ENCODE measurements at regions of chr3 and their contacts with region 1.

Region 1: DNA sequence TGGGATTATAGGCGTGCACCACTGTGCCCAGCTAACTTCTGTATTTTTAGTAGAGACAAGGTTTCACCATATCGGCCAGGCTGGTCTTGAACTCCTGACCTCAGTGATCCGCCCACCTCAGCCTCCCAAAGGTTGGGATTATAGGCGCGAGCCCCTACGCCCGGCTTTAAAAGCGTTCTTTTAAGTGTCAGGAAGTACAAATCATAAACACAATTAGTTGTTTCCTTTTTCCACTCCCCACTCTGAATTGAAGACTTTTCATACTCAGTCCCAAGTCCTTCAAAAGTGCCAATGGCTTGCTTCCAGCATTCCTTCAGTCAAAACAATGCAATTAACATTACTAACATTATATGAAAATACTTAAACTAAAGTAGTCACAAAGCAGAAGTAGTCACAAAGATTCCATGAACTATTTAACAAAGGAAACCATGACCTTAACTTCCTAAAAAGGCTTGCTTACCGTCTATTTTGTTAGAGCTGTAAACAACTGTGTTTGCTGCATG is 8.1 kb downstream of the WDR82 start:
- DNase-seq: peak; percentile 31
- H3K4me3 Mint-ChIP-seq: peak overlapping the region; percentile 77
- H3K27ac Mint-ChIP-seq: peak overlapping the region; percentile 91
- H3K4me1 Mint-ChIP-seq: peaks cover 85% of the 10 kb centered on the region
- H3K27me3 Mint-ChIP-seq: no peaks in the 10 kb centered on the region

Region 2: GRCh38 chr3:52238761-52239701 is 31.3 kb before region 1 on chr3 and contains the start of gene TWF2:
- CTCF ChIA-PET with region 1: interaction called, 148 read pairs
- POLR2A ChIA-PET with region 1: interaction called, 16 read pairs
- intact Hi-C with region 1: loop called (anchors 1 kb)
- DNase-seq: peak; percentile 90
- H3K4me3 Mint-ChIP-seq: peak within 1 kb of the TSS; percentile 99
- H3K27ac Mint-ChIP-seq: peak within 1 kb of the TSS; percentile 97
- H3K4me1 Mint-ChIP-seq: peaks cover 70% of the 10 kb centered on the region
- H3K27me3 Mint-ChIP-seq: no peaks in the 10 kb centered on the region
- total RNA-seq, gene TWF2: 114 to 118 TPM

Region 3: DNA sequence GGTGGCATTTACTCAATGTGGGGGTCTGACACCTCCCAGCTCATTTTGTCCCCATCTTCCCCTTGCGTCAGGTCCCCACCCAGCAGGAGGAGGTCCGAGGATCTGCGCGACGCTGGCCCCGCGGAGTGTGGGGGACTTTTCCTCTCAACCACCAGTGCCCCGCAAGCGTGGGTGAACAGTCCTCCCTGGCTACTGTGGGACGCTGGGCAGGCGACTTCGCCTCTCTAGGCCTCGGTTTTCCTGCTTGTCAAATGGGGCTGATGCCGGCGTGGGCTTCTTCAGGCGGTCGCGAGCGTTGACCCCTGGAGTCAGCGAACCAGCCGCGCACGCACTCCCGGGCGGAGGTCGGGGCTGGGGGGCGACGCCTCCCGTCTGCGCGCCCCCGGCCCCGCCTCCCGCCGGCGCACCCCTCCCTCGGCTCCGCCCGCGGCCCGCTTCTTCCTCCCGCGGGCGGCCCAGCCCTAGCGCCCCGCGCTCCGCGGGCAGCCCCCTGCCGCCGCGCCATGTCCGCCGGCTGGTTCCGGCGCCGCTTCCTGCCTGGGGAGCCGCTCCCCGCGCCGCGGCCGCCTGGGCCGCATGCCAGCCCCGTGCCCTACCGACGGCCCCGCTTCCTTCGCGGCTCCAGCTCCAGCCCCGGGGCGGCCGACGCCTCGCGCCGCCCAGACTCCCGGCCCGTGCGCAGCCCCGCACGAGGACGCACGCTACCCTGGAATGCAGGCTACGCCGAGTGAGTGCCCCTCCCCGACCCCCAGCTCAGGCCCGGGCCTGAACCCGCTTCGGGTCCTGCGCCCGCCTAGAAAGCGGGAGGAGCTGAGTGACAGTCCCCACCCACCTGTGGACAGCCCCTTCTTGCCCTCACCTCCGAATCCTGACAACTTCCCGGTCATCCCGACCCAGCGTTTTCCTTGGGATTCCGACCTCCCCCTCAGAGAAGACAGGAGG is 24.7 kb before region 1 on chr3 and contains the start of gene PPM1M:
- CTCF ChIA-PET with region 1: interaction called, 148 read pairs
- POLR2A ChIA-PET with region 1: interaction called, 16 read pairs
- intact Hi-C with region 1: loop called (anchors 1 kb)
- DNase-seq: peak; percentile 64
- H3K4me3 Mint-ChIP-seq: peak within 1 kb of the TSS; percentile 95
- H3K27ac Mint-ChIP-seq: peak within 1 kb of the TSS; percentile 94
- H3K4me1 Mint-ChIP-seq: peaks cover 80% of the 10 kb centered on the region
- H3K27me3 Mint-ChIP-seq: no peaks in the 10 kb centered on the region
- total RNA-seq, gene PPM1M: 111 TPM

Region 4: DNA sequence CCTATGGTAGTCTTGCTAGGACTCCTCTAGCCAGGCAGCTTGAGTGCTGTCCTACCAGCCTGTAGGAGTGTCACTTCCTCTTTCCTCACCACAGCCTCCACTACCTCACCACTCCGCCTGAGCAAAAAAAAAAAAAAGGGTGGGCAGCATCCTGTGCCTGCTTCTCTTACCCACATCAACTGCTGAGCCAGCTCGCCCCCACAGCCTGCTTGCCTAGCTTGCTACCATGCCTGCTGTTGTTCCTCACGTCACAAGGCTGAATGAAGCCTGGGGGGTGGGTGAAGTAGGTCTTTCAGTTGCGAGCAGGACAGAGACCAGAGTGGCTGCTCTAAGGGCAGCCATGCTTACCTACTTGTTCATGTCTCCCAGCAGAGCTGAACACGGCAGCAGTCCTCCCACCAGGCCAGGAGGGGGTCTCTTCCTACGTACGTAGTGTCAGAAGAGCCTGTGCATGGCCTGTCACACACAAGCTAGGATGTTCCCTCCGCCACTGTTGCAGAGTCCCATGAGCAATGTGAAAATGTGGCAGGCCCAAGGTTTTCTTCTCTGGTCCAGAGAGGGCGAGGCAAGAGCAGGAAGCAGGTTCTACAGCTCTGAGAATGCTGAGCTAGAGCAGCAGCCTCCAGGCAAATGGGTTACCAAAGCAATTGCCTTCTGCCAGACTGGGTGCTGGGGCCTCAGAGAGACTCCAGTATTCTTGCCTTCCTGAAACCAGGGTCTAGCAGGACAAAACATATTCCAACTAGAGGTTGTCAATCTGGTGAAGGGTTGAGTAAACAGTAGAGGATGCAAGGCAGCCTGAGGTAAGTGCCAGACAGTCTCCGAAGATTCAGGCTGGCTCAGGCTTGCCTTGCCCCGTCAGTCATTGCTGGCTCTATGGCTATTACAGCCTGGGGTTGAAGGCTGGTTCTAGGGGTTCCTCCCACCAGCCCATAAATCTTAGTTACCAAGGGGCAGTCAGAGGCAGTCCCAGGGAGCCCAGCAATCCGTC is 16.7 kb before region 1 on chr3:
- CTCF ChIA-PET with region 1: interaction called, 7 read pairs
- POLR2A ChIA-PET with region 1: interaction called, 26 read pairs
- intact Hi-C with region 1: loop called (anchors 1 kb)
- DNase-seq: peak; percentile 93
- H3K4me3 Mint-ChIP-seq: peak overlapping the region; percentile 71
- H3K27ac Mint-ChIP-seq: peak overlapping the region; percentile 97
- H3K4me1 Mint-ChIP-seq: peaks cover 88% of the 10 kb centered on the region
- H3K27me3 Mint-ChIP-seq: no peaks in the 10 kb centered on the region

Region 5: GRCh38 chr3:52259035-52259434 is 11.3 kb before region 1 on chr3:
- CTCF ChIA-PET with region 1: interaction called, 12 read pairs
- POLR2A ChIA-PET with region 1: interaction called, 26 read pairs
- intact Hi-C with region 1: loop called (anchors 1 kb)
- DNase-seq: no peak
- H3K4me3 Mint-ChIP-seq: no peak overlapping the region
- H3K27ac Mint-ChIP-seq: peak overlapping the region; percentile 97
- H3K4me1 Mint-ChIP-seq: peaks cover 90% of the 10 kb centered on the region
- H3K27me3 Mint-ChIP-seq: no peaks in the 10 kb centered on the region

Region 6: GRCh38 chr3:52420388-52420787 is 150.1 kb after region 1 on chr3:
- CTCF ChIA-PET with region 1: no interaction called
- POLR2A ChIA-PET with region 1: no interaction called
- intact Hi-C with region 1: no loop called
- DNase-seq: no peak
- H3K4me3 Mint-ChIP-seq: no peak overlapping the region
- H3K27ac Mint-ChIP-seq: no peak overlapping the region
- H3K4me1 Mint-ChIP-seq: peaks cover 2% of the 10 kb centered on the region
- H3K27me3 Mint-ChIP-seq: no peaks in the 10 kb centered on the region